Posterior cingulate gyrus (tissue), 11 donors: ENCODE measurements at regions of chr19 and their contacts with region 1.

Region 1: DNA sequence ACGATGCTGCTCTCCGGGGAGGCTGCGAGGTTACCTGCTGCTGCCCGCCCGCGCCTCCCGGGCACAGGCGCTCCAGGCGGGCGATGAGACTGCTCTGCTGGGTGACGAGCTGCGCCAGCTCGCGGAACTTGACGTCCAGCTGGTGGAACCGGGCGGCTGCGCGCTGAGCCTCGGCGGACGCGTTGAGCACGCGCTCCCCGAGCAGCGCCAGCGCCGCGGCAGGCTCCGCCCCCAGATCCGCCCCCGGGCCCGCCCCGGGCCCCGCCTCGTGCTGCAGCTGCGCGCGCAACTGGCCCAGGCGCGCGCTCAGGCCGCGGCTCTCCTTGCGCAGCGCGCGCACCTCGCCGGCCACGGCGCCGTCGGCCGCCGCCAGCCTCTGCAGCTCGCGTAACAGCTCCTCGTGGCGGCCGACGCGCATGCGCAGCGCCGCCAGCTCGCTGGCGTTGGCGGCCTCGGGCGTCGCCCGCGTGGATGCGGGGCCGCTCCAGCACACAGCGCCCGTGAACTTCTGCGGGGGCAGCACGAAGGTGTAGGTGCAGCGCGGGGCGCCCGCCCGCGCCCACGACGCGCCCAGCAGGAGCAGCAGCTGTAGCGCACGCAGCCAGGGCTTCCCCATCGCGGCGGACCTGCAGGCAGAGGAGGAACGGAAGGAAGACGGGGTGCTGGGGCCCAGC is 6.4 kb downstream of the ANGPTL6 start:
- DNase-seq: peak; percentile 73 to 98 (median 86)

Region 2: DNA sequence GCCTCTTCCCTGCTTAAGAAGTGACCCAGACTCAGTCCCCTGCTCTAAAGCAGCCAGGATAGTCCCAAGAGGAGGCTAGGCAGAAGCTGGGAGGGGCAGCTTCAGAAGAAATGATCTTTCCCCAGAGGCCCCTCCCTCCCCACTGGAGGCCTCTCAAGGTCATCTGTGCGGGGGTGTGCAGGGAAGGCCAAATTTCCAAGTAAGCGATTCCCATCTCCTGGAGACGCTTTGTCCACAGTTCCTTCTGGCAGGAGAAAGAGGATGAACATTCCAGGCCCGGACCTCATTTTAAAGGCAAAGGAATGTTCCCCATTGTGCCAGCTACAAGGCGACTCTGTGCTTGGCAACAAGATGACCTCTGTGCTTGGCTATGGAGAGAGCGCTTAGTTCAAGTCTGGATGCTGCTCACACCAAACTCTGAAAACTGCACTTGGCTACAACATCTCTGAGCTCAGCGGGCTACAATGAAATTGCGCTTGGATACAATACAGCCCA is 109.3 kb before region 1 on chr19:
- intact Hi-C with region 1: no loop called
- DNase-seq: peak in 9 of 10 donors; percentile 6 to 79 (median 39)

Region 3: DNA sequence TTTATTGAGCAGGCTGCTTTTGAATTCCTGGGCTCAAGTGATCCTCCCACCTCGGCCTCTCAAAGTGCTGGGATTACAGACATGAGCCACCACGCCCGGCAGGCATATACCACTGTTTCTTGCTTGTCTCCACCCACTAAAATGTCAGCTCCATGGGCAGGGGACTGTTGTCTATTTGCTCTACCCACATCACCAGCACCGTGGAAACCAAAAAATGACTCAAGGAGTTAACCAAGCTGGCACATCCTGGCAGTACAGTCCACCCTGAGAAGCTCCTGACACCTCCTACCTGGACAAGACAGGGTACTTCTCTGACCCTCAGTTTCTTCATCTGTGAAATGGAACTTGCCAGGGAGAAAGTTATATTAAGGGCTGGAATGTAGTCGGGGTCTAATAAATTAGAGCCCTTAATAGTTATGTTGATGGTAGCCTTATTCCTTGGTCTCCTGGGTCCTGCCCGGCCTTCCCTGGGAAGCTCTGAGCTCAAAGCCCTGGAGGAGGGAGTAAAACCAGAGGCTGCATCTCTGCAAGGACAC is 68.9 kb before region 1 on chr19:
- intact Hi-C with region 1: loop called (anchors 5 kb)
- DNase-seq: no peak